Transverse colon (tissue), 4 donors: ENCODE measurements at regions of chr17 and their contacts with region 1.

Region 1: DNA sequence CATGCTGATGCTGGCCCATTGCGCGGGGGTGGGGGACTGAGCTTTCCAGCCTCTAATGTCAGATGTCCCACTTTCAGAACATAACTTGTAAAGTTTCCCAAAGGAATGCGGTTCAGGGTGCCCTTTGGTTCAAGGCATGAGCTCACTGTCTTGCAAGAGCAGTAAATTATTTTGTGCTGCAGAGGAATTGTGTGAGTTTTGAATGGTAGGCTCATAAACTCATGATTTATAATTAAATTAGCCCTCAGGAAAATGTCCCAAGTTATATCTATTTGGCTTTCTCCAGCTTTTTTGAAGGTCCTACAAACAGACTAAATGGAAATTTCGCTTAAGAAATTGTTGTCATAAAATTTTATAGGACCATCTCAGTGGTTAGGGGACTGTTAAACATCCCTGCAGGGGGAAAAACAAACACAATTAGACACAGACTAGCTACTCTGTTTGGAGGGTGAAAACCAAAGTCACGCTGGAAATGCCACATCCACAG is 321.8 kb downstream of the HS3ST3B1 start:
- DNase-seq: no peak
- H3K4me3 ChIP-seq: no peak overlapping the region
- H3K27ac ChIP-seq: no peak overlapping the region
- H3K4me1 ChIP-seq: no peaks in the 10 kb centered on the region
- H3K27me3 ChIP-seq: no peaks in the 10 kb centered on the region
- CTCF ChIP-seq: no peak
- EP300 ChIP-seq: no peak
- POLR2A ChIP-seq: no peak

Region 2: GRCh38 chr17:14359163-14360020 is 263.3 kb before region 1 on chr17:
- in situ Hi-C with region 1: no loop called
- intact Hi-C with region 1: no loop called
- DNase-seq: no peak
- H3K4me3 ChIP-seq: no peak overlapping the region
- H3K27ac ChIP-seq: no peak overlapping the region
- H3K4me1 ChIP-seq: no peaks in the 10 kb centered on the region
- H3K27me3 ChIP-seq: no peaks in the 10 kb centered on the region
- CTCF ChIP-seq: no peak
- EP300 ChIP-seq: no peak
- POLR2A ChIP-seq: no peak

Region 3: GRCh38 chr17:14373614-14374259 is 248.9 kb before region 1 on chr17:
- in situ Hi-C with region 1: no loop called
- intact Hi-C with region 1: loop called (anchors 5 kb)
- DNase-seq: no peak
- H3K4me3 ChIP-seq: no peak overlapping the region
- H3K27ac ChIP-seq: no peak overlapping the region
- H3K4me1 ChIP-seq: no peaks in the 10 kb centered on the region
- H3K27me3 ChIP-seq: no peaks in the 10 kb centered on the region
- CTCF ChIP-seq: no peak
- EP300 ChIP-seq: no peak
- POLR2A ChIP-seq: no peak